ENCODE measurements at regions of chr10 and their contacts with region 1.

Region 1: DNA sequence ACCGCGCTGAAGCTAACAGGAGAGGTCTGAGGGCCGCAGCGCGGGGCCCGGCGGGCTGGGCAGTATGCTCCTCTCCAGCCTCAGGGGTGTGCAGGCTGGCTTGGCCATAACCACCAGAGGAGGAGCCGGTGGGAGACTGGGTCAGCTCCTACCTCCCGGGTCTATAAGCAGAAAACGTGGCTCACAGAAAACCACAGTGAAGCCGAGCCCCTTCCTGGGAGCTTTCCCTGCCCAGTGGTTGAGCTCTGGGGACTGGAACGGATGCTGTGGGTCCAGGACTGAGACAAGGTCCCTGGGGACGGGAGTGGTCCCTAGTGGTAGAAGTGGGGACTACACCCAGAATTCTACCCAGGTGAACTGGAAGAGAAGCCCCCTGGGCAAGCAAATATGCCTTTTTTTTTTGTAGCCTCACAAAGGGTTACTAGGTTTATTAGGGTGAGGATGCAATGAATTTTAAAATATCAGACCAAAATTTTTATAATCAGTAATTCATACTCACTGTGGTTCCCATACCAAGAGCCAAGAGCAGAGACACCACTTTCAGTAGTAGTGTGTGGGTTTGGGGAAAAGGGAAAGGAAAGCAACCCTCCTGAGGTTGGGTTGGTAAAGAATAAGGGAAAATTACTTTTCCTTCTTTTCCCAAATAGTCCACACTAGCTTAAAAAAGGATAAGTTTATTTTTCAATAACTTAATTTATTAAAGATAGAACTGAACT is 67.9 kb upstream of the PRKCQ start:
- DNase-seq: peak; percentile 58 to 86
- H3K4me3 ChIP-seq: no peak overlapping the region; a peak in 1 of 8 replicates
- H3K27ac ChIP-seq: no peak overlapping the region
- H3K4me1 ChIP-seq: peaks cover 0 to 12% (median 3%) of the 10 kb centered on the region in 4 experiments; a peak in 4 of 7 replicates
- H3K27me3 ChIP-seq: no peaks in the 10 kb centered on the region
- CTCF ChIP-seq: peak; percentile 73 to 79 (median 75)
- EP300 ChIP-seq: no peak
- POLR2A ChIP-seq: no peak
- RAD21 ChIP-seq: peak; percentile 74 to 83

Region 2: DNA sequence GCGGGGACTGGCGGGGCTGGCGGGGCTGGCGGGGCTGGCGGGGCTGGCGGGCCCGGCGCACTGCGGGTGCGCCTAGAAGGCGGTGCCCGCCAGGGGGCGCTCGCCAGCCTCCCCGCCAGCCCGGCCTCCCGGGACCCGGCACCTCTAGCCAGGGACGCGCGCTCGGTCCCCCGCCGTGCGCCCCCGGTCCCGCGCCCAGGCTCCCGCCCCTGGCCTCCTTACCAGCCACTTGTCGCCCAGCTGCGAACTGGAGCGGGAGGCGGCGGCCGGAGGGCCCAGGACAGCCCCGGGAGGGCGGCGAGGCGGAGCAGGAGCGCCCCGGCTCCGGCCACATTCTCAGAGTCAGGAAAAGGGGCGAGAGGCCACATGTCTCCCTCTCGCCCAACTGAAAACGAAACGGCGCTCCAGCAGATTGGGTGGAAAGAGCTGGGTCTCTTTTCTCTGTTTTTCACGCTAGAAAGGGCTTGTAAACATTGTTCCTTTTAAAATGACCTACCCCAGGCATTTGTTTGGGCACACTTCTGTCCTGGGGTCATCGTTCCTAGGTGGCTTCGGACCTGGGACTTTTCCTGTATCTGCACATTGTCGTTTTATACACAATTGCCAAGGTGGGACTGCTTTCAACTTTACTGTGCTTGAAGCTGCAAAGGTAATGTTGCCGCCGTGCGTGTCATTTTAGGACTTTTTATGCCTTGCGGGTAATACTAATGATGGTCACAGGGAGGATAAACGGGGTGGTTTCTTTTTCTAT is 67.5 kb before region 1 on chr10:
- CTCF ChIA-PET with region 1: interaction called, 24 read pairs
- POLR2A ChIA-PET with region 1: no interaction called
- DNase-seq: peak; percentile 44 to 92
- H3K4me3 ChIP-seq: peak overlapping the region; percentile 54 to 76 (median 72)
- H3K27ac ChIP-seq: peak overlapping the region; percentile 60; the same call in 1 of the 2 replicates
- H3K4me1 ChIP-seq: peaks cover 2 to 9% (median 8%) of the 10 kb centered on the region in 4 experiments; a peak in 6 of 7 replicates
- H3K27me3 ChIP-seq: peaks cover 0 to 5% (median 2%) of the 10 kb centered on the region in 4 experiments; a peak in 4 of 7 replicates
- CTCF ChIP-seq: peak; percentile 34 to 63 (median 58)
- EP300 ChIP-seq: 0 out of 3 replicates have a peak, but pooled peaks of 1 of the 2 experiments have one; percentile 21
- POLR2A ChIP-seq: peak; percentile 60 to 65; a peak in 2 of 3 replicates
- RAD21 ChIP-seq: peak; percentile 28 to 56

Region 3: GRCh38 chr10:6622921-6623320 is 25.0 kb before region 1 on chr10:
- CTCF ChIA-PET with region 1: interaction called, 15 read pairs
- POLR2A ChIA-PET with region 1: no interaction called
- DNase-seq: no peak
- H3K4me3 ChIP-seq: no peak overlapping the region; a peak in 1 of 8 replicates
- H3K27ac ChIP-seq: no peak overlapping the region
- H3K4me1 ChIP-seq: peaks cover 0 to 15% (median 7%) of the 10 kb centered on the region in 4 experiments; a peak in 3 of 7 replicates
- H3K27me3 ChIP-seq: no peaks in the 10 kb centered on the region
- CTCF ChIP-seq: no peak
- EP300 ChIP-seq: no peak
- POLR2A ChIP-seq: no peak
- RAD21 ChIP-seq: no peak

Region 4: DNA sequence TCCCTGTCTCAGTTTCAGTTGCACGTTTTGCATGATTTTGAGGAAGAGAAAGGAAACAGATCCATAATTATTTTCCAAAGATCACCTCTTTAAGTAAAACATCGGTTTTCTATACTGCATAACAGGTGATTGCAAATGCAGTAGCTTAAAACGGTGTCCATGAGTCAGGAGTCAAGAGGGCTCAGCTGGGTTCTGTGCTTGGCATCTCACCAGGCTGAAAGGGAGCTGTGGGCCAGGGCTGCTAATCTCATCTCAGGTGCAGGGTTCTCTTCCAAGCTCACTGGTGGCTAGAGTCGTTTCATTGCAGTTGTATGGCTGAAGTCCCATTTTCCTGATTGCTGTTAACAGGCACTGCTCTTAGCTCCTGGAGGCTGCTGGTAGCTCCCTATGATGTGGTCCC is 10.9 kb before region 1 on chr10:
- CTCF ChIA-PET with region 1: interaction called, 21 read pairs
- POLR2A ChIA-PET with region 1: interaction called, 3 read pairs
- DNase-seq: no peak
- H3K4me3 ChIP-seq: no peak overlapping the region
- H3K27ac ChIP-seq: no peak overlapping the region
- H3K4me1 ChIP-seq: no peaks in the 10 kb centered on the region
- H3K27me3 ChIP-seq: no peaks in the 10 kb centered on the region
- CTCF ChIP-seq: no peak
- EP300 ChIP-seq: no peak
- POLR2A ChIP-seq: no peak
- RAD21 ChIP-seq: no peak

Region 5: DNA sequence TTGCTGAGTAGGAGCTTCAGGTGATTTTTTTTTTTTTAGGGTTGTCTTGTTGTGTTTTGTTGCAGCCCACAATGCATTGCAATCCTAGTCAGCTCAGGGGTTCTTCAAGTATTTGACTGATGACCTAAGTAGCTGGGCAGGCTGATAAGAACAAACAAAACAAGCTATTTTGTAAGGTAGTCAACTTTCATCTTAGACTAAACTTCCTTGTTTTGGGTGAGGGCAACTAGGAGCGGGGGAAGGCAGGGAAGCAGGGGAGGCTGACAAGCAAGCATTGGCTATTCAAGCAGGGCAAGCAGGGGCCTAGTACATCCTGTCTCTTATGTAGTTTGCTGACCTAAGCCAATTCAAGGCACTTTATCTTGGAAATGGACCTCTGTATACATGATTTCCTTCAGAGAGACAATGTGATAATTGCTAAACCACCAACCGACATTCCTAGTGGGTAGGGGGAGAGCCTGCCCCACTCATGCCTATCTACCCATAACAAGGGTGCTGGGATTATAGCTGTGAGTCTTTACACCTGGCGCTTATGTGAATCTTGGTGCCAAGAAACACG is 95.4 kb after region 1 on chr10:
- CTCF ChIA-PET with region 1: no interaction called
- POLR2A ChIA-PET with region 1: no interaction called
- DNase-seq: no peak
- H3K4me3 ChIP-seq: no peak overlapping the region
- H3K27ac ChIP-seq: no peak overlapping the region
- H3K4me1 ChIP-seq: peaks cover 0 to 7% (median 3%) of the 10 kb centered on the region in 4 experiments; a peak in 4 of 7 replicates
- H3K27me3 ChIP-seq: no peaks in the 10 kb centered on the region
- CTCF ChIP-seq: no peak
- EP300 ChIP-seq: no peak
- POLR2A ChIP-seq: no peak
- RAD21 ChIP-seq: no peak